HAP-1 (cell line): ENCODE measurements at regions of chrX and their contacts with region 1.

Region 1: GRCh38 chrX:47650164-47651042 is at the start of gene ELK1:
- DNase-seq: peak; percentile 99
- H3K4me3 ChIP-seq: peak within 1 kb of the TSS; percentile 96
- H3K4me1 ChIP-seq: peaks cover 10% of the 10 kb centered on the region
- H3K27me3 ChIP-seq: no peaks in the 10 kb centered on the region

Region 2: DNA sequence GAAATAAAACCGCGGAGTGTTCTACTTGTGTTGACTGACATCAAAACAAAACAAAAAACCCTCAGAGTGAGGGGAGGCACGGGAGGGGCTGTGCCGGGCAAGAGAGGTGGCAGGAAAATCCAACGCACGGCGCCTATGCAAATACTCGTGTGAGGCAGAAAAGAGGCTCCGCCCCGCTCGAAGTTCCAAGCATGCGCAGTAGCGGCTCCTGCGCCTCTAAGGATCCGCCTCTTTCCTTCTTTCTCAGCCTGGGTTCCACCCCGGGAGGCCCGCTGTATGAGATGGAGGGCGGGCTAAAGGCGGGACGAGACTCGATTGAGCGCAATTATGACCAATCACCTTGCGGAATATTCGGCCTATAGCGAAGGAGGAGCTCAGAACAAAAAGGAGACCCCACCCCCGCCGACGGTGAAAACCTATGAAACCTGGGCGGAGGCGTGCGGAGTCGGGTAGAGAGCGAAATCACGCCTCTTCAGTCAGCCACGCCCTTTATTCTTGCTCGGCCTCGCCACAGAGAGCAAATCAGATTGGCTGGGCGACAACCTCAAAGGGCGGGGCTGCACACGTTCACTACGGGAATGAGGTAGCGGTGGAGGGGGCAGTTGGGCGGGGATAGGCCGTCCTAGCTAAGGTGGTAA is 432.6 kb before region 1 on chrX:
- in situ Hi-C with region 1: loop called (anchors 10 kb)
- DNase-seq: peak; percentile 99 to 100
- H3K4me3 ChIP-seq: peak overlapping the region; percentile 78
- H3K4me1 ChIP-seq: peaks cover 10% of the 10 kb centered on the region
- H3K27me3 ChIP-seq: no peaks in the 10 kb centered on the region